A549 (cell line): ENCODE measurements at regions of chr11 and their contacts with region 1.

Region 1: GRCh38 chr11:61639816-61640443 is 40.3 kb upstream of the DAGLA start:
- DNase-seq: no peak
- ATAC-seq: no peak
- H3K4me3 ChIP-seq: no peak overlapping the region
- H3K27ac ChIP-seq: no peak overlapping the region
- H3K4me1 ChIP-seq: no peaks in the 10 kb centered on the region
- CTCF ChIP-seq: no peak
- EP300 ChIP-seq: no peak
- POLR2A ChIP-seq: no peak
- RAD21 ChIP-seq: no peak

Region 2: GRCh38 chr11:61477727-61478148 is 162.2 kb before region 1 on chr11:
- CTCF ChIA-PET with region 1: interaction called, 141 read pairs
- POLR2A ChIA-PET with region 1: no interaction called
- DNase-seq: peak; percentile 37 to 63
- ATAC-seq: peak; percentile 16 to 71; a peak in 3 of 6 replicates
- H3K4me3 ChIP-seq: no peak overlapping the region
- H3K27ac ChIP-seq: no peak overlapping the region
- H3K4me1 ChIP-seq: no peaks in the 10 kb centered on the region
- CTCF ChIP-seq: peak; percentile 88
- EP300 ChIP-seq: no peak
- POLR2A ChIP-seq: no peak
- RAD21 ChIP-seq: peak; percentile 89 to 90

Region 3: DNA sequence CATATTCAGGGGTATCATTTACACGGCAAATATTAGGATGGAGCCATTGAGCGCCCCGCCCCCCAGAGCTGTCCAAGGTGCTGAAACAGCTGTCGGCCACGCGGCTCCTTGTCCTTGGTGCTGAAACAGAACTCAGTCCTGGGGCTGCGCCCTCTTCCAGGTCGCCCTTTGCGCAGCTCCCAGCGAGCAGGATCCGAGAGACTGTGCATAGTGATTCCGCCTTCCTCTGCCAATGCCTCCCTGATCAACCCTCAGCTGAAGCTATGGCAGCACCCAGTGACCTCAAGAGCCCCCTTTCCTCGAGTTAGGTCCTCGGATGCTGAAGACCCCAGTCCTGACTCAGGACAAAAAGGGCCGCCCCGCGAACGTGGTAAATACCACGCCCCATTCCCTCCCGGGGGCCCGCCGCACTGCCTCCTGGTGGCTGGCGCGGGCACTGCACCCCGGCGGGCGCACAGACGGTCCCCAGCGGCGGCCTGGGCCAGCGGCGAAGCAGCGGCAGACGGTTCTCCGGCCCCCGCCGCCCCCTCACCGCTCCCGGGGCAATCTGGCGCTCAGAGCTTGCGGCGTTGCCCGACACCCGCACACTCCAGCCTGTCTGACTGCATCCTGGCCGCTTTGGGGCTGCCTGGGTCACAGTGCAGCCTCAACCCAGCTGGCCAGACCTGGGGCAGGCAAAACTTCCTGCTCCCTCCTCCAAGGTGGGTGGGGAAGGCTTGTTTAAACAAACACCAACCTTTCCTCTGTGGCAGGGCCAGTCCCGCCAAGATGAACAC is 72.5 kb before region 1 on chr11:
- CTCF ChIA-PET with region 1: interaction called, 10 read pairs
- POLR2A ChIA-PET with region 1: no interaction called
- DNase-seq: peak; percentile 87 to 92
- ATAC-seq: peak; percentile 73 to 92
- H3K4me3 ChIP-seq: peak overlapping the region; percentile 31; the same call in 1 of the 3 replicates
- H3K27ac ChIP-seq: no peak overlapping the region
- H3K4me1 ChIP-seq: peaks cover 5% of the 10 kb centered on the region; the same call in 1 of the 3 replicates
- CTCF ChIP-seq: peak; percentile 72
- EP300 ChIP-seq: no peak
- POLR2A ChIP-seq: no peak
- RAD21 ChIP-seq: peak; percentile 26 to 35; a peak in 3 of 5 replicates

Region 4: DNA sequence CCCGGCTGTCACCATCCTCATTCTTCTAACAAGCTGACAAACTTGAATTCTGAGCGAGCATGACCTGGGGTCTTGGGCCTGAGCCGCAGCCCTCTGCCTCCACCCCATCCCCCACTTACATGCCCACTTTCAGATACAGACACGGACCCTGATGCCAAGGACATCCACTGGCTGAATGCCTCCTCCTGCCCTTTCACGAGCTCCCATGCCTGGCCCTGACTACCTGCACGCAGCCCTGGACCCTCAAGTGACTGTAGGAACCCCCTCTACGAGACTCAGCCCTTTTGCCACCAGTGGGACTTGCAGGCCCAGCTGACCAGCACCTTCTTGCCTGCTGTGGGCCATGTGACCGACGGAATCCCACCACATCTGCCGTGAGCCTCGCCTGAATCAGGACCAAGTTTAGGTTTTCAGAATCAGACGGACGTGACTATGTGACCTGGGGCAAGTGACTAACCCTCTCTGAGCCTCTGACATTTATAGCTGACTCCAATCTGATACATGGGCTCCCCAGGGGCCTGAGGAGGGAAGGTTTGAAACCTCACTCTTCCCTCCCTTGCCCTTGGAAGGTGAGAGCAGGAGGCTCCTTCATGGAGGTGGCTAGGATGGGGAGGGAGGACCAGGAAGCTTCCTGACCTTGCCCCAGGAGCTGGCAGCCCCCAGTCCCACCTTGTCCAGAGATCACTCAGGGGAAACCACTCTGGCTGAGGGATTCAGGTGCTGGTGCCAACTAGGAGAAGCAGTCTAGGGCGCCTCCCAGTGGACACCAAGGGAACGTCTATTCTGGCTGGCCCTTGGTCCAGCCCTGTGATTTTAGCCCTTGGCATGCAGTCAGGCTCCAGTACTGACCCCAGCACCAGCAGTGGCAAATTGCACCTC is 12.1 kb before region 1 on chr11:
- CTCF ChIA-PET with region 1: interaction called, 59 read pairs
- POLR2A ChIA-PET with region 1: interaction called, 6 read pairs
- DNase-seq: peak; percentile 65 to 67
- ATAC-seq: peak; percentile 81 to 95
- H3K4me3 ChIP-seq: no peak overlapping the region
- H3K27ac ChIP-seq: no peak overlapping the region
- H3K4me1 ChIP-seq: no peaks in the 10 kb centered on the region
- CTCF ChIP-seq: peak; percentile 75
- EP300 ChIP-seq: no peak
- POLR2A ChIP-seq: no peak
- RAD21 ChIP-seq: peak; percentile 68 to 72

Region 5: DNA sequence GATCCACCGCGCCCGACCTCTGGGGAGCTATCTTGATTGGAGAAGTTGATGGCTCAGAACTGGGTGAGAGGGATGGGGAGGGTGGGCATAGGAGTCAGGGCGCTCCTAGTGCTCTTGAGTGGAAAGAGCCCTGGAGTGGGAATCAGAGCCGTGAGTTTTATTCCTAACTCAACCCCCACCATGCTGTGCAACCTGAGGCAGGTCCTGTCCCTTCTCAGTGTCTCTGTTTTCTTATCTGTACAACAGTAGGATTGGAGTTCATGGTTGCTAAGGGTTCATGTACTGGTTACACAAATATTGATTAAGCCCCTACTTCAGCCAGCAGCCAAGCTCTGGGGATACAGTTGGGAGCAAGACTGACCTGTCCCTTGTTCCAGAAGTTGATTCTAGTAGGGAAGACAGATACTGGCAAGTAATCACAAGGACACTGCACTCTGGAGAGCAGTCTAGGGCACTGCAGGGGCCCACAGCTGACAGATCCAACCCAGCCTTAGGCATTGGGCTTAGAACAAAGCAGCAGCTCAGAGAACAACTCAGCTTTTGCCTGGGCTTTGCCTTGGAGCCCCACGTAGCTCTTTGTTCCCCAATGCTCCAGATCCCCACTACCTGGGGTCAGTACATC is 27.9 kb after region 1 on chr11:
- CTCF ChIA-PET with region 1: interaction called, 10 read pairs
- POLR2A ChIA-PET with region 1: no interaction called
- DNase-seq: no peak
- ATAC-seq: peak in 1 of 2 experiments; percentile 62; a peak in 3 of 6 replicates
- H3K4me3 ChIP-seq: no peak overlapping the region
- H3K27ac ChIP-seq: no peak overlapping the region
- H3K4me1 ChIP-seq: peaks cover 8% of the 10 kb centered on the region; the same call in 1 of the 3 replicates
- CTCF ChIP-seq: no peak
- EP300 ChIP-seq: no peak
- POLR2A ChIP-seq: no peak
- RAD21 ChIP-seq: no peak

Region 6: DNA sequence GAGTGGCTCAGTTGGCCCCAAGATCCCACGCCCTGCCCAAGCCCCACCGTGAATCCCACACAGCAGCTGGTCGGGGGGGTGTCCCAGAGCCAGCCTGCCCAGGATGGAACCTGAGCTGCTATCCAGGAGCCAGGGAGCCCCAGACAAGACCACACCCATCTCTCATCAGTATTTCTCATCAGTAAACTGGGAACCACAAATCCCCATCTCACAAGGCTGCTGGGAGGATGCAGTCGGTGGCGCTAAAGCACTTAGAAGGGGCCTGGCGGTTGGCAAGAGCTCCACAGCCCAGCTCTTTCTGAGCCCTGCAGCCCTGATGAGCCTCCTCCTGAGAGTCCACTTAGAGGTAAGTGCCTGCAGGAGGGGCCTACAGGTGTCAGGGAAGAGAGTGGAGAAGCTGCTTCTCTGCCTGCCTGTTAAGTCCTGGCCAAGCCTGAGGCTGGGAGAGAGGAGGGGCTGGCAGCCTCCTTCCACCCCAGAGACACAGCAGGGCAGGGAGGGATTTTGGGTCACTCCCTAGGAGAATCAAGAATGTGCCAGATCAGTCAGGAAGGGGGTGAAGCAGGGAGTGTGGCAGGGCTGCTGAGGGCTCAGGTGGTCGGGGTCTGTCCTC is 245.3 kb after region 1 on chr11:
- CTCF ChIA-PET with region 1: no interaction called
- POLR2A ChIA-PET with region 1: no interaction called
- DNase-seq: no peak
- ATAC-seq: peak; percentile 8 to 26; a peak in 2 of 6 replicates
- H3K4me3 ChIP-seq: no peak overlapping the region
- H3K27ac ChIP-seq: 0 out of 6 replicates have a peak overlapping the region, but pooled peaks of 1 of the 2 experiments have one; percentile 30
- H3K4me1 ChIP-seq: peaks cover 31% of the 10 kb centered on the region
- CTCF ChIP-seq: no peak
- EP300 ChIP-seq: no peak
- POLR2A ChIP-seq: no peak
- RAD21 ChIP-seq: no peak